HAP-1 (cell line): ENCODE measurements at regions of chr1 and their contacts with region 1.

Region 1: GRCh38 chr1:62841587-62842169 is 57.7 kb downstream of the ATG4C start:
- DNase-seq: peak; percentile 54 to 76
- H3K4me3 ChIP-seq: no peak overlapping the region
- H3K4me1 ChIP-seq: peaks cover 2% of the 10 kb centered on the region; the same call in 1 of the 2 replicates
- H3K27me3 ChIP-seq: no peaks in the 10 kb centered on the region

Region 2: DNA sequence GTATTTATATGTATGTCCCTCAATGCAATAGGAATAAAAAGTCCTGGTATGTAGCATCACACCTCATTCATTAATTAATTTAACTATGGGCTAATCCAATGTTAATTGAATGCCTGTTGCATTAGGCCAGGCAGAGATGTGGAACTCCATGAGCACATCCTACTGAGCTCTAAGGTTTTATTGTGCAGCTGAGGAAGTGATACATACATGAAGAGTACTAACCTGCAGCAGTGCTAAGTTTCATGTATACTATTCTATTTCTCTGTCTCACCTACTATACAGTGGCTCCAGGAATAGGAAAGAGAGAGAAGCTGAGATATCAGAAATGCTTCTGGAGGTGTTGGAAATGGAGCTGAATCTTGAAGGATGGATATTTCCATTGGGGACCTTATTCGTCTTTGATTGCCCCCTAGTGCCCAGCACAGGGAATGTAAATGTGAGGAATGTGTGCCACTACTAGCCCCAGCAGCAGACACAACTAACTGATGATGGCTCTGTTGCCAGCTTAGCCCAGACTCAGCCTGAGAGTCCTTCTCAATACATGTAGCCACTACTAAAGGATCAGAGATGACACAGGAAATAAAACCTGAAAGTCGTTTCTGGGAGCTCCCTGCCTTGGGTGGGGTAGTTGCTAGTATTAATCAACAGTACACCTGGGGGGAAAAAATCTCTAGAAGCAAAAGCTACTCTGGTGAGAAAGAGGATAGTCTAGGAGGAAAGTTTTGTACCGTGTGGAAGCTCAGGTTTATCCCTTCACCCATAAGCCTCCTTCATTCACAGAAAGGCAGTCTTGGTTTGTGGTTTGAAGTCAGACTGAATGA is 307.4 kb after region 1 on chr1:
- in situ Hi-C with region 1: loop called (anchors 25 kb)
- DNase-seq: peak; percentile 64 to 72
- H3K4me3 ChIP-seq: no peak overlapping the region
- H3K4me1 ChIP-seq: no peaks in the 10 kb centered on the region
- H3K27me3 ChIP-seq: no peaks in the 10 kb centered on the region